PC-9 (cell line): ENCODE measurements at regions of chr6 and their contacts with region 1.

Region 1: DNA sequence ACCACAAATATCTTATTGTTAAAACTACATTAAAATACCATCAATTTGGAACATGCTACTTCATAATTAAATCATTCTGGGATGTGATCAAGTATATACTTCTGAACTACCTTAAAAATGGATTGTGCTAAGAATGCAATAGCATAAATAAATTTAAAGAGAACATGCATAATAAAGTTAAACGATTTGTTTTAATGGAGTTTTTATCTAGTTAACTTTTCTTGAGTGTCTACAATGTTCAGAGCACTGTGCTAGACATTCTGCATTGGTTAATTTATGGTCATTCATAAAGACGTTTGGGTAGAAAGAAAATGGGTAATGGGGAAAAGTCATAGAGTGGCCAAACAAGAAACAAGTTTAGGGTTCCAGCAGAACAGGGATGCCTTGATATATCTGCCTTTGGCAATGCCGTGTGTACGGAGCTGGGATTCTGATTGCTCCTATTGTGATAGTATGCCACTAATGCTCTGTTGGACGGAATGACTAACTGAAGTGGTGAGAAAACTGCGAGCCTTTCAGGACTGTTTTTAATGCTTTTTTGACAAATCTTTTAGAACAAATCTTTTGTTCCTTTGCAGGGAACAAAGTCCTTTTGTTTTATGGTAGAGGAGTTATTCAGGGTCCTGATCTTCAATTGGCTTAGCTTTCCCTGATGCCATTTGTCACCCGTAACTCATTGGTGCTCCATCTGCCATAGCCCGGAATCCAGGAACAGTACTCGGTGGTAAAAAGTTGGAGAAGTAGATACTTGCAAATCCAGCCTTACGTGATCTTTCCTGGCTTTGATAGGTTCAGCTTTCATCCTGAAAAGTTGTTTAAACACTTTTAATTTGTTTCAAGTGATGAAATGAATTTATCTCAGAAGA is 162.6 kb downstream of the BCKDHB start:
- DNase-seq: no peak
- H3K4me3 ChIP-seq: no peak overlapping the region
- H3K27ac ChIP-seq: no peak overlapping the region
- H3K4me1 ChIP-seq: no peaks in the 10 kb centered on the region
- H3K27me3 ChIP-seq: no peaks in the 10 kb centered on the region
- CTCF ChIP-seq: no peak

Region 2: GRCh38 chr6:80214436-80215022 is 54.6 kb before region 1 on chr6:
- CTCF ChIA-PET with region 1: no interaction called
- POLR2A ChIA-PET with region 1: no interaction called
- intact Hi-C with region 1: no loop called
- DNase-seq: peak in 1 of 2 experiments; percentile 7
- H3K4me3 ChIP-seq: no peak overlapping the region
- H3K27ac ChIP-seq: no peak overlapping the region
- H3K4me1 ChIP-seq: 0 out of 2 replicates have a peak, but pooled peaks cover 7% of the 10 kb centered on the region
- H3K27me3 ChIP-seq: no peaks in the 10 kb centered on the region
- CTCF ChIP-seq: peak; percentile 73

Region 3: DNA sequence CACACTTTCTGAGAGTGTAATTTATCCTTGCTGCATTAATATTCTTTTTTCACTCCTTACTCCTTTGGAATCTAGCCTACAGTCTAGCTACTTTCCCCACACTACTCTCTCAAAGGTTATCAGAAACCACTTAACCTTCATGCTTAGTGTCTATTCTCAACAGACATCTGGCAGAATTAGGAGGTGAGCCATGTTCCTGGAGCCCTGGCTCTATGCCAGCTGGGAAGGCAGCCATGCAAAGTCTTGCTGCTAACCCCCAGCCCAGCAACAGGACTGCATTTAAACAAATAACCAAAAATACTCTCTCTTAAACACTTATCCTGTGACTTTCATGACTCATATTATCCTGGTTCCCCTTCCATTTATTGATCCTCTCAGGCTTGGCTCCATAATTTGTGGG is 97.6 kb after region 1 on chr6:
- CTCF ChIA-PET with region 1: no interaction called
- POLR2A ChIA-PET with region 1: interaction called, 13 read pairs
- intact Hi-C with region 1: no loop called
- DNase-seq: no peak
- H3K4me3 ChIP-seq: no peak overlapping the region
- H3K27ac ChIP-seq: no peak overlapping the region
- H3K4me1 ChIP-seq: no peaks in the 10 kb centered on the region
- H3K27me3 ChIP-seq: no peaks in the 10 kb centered on the region
- CTCF ChIP-seq: no peak